Posterior cingulate gyrus (tissue), 11 donors: ENCODE measurements at regions of chr20 and their contacts with region 1.

Region 1: GRCh38 chr20:41038878-41039404 is 10.3 kb downstream of the TOP1 start:
- DNase-seq: no peak

Region 2: GRCh38 chr20:39547546-39548408 is 1491.2 kb before region 1 on chr20:
- intact Hi-C with region 1: no loop called
- DNase-seq: no peak

Region 3: DNA sequence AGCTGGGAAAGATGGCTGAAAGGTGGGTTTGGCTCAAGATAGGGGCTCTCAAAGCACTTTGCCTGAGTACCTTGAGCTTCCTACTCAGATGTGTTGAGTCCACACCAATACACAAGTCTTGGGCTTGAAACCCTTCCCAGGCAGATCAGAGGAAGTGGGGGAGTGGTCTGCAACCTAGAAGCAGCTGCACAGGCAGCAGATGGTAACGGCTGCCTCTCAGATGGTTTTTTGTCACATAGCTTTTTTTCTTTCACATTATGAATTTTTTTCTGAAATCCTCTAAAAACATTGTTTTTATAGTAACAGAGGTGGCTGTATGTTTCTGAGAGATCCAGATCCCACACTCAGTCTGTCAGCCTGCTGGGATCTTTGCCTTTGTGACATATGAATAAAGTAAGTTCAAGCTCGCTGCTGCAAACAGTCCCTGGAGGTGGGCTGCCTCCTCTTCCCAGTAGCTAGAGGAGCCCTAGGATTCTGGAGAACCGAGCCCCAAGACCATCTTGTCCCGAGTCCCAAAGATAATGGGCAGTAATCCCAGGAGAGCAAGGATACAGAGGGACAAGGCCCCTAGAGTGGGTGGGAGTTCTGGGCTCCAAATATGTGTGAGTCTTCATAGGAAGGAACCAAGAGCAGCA is 107.4 kb before region 1 on chr20:
- intact Hi-C with region 1: no loop called
- DNase-seq: peak in 3 of 10 donors; percentile 11 to 22 (median 20)

Region 4: GRCh38 chr20:41081276-41081814 is 42.4 kb after region 1 on chr20:
- intact Hi-C with region 1: loop called (anchors 5 kb)
- DNase-seq: no peak

Region 5: DNA sequence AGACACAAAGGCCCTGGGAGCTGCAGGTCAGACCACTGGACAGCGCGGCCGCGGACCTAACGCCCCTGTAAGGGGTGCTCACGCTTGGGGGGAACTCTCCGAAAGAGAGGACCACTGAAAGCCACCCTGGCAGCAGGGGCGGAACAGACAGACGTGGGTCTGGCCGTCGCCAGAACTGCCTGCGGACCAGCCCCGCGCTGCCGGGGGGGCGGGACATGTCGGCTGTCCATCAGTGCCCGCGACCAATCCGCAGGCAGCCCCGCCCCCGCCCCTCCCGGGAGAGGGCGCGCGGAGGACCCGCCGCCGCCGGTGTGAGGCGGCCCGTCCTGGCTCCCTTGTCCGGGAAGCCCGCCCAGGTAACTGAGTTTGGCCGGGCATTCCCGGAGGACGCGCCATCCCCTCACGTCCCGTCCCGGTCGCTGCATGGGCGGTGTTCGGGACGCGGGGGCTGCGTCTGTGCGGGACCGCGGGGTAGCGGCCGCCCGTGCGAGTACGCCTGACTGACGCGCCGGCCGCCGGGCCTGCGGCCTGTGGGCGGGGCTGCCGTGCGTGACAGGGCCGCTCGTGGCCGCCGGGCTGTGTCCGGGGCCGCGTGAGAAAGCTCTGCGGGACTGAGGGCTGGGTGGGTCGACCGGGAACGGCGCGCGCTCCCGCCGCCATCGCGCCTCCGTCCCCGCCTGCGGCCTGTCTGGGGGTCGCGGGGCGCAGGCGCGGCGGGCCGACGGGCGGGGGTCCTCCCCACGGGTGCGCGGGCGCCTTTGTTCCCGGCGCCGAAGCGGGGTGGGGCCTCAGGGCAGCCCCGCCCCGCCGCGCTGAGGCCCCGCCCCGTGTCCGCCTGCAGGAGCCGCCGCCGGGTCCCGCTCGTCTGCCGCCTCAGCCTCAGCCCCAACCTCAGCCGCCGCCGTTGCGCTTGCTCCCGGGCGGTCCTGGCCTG is 98.0 kb after region 1 on chr20 and contains the start of gene PLCG1:
- intact Hi-C with region 1: no loop called
- DNase-seq: peak; percentile 81 to 99 (median 92)